CD8-positive, alpha-beta T cell (primary cell): ENCODE measurements at regions of chr2 and their contacts with region 1.

Region 1: GRCh38 chr2:160353166-160353565 is 140.4 kb downstream of the RBMS1 start:
- DNase-seq: peak in 4 of 9 experiments; percentile 35 to 65 (median 46)
- ATAC-seq: peak; percentile 79
- H3K4me3 ChIP-seq: no peak overlapping the region
- H3K4me3 Mint-ChIP-seq: no peak overlapping the region
- H3K27ac ChIP-seq: no peak overlapping the region
- H3K27ac Mint-ChIP-seq: peak overlapping the region; percentile 60
- H3K4me1 ChIP-seq: peaks cover 18% of the 10 kb centered on the region
- H3K4me1 Mint-ChIP-seq: peaks cover 77% of the 10 kb centered on the region
- H3K27me3 ChIP-seq: no peaks in the 10 kb centered on the region
- H3K27me3 Mint-ChIP-seq: no peaks in the 10 kb centered on the region
- CTCF ChIP-seq: peak; percentile 64

Region 2: DNA sequence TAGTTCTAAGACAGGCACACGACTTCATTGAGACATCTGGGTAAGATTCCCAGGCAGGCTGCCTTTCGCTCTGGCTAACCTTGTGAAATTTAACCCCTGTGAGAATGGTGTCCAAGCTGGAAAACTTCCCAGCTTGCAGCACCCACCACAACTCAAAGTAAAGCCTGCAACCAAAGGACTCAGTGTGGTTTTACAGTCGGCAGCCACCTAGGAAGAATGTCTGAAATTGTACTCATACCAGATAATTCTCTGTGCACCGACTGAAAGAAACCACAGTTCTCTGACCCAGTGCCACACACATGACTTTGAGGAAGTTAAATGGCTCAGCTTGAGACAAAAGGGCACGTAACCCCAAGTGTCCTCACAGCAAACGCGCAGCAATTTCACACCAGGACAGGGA is 14.7 kb after region 1 on chr2:
- CTCF ChIA-PET with region 1: interaction called, 9 read pairs
- POLR2A ChIA-PET with region 1: no interaction called
- intact Hi-C with region 1: loop called in 1 of 2 experiments (anchors 2 kb)
- DNase-seq: peak in 2 of 9 experiments; percentile 17 to 33
- ATAC-seq: peak; percentile 36
- H3K4me3 ChIP-seq: no peak overlapping the region
- H3K4me3 Mint-ChIP-seq: peak overlapping the region; percentile 32
- H3K27ac ChIP-seq: peak overlapping the region in 1 of 2 experiments; percentile 21
- H3K27ac Mint-ChIP-seq: peak overlapping the region; percentile 37
- H3K4me1 ChIP-seq: peaks cover 43% of the 10 kb centered on the region
- H3K4me1 Mint-ChIP-seq: peaks cover 86% of the 10 kb centered on the region
- H3K27me3 ChIP-seq: no peaks in the 10 kb centered on the region
- H3K27me3 Mint-ChIP-seq: no peaks in the 10 kb centered on the region
- CTCF ChIP-seq: no peak

Region 3: DNA sequence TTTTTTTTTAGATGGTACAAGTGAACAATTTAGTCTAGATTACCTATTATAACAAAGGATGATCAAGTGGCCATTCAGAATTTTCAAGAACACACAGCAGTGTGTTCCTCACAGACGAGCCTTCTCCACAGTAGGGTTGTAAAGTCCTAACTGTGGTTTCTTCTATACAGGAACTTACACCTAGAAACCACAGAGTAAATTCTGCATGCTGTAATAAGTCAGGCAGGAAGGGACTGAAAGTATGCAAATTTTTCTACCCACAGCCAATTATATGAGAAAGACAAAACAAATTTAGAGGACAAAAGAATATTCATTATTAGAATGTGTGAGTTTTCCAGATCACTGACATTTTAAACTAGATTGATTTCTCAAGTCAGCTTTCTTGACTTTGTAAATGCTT is 41.0 kb after region 1 on chr2:
- CTCF ChIA-PET with region 1: interaction called, 3 read pairs
- POLR2A ChIA-PET with region 1: no interaction called
- intact Hi-C with region 1: loop called in 1 of 2 experiments (anchors 5 kb)
- DNase-seq: peak in 2 of 9 experiments; percentile 69 to 80
- ATAC-seq: peak; percentile 92
- H3K4me3 ChIP-seq: peak overlapping the region in 1 of 2 experiments; percentile 21
- H3K4me3 Mint-ChIP-seq: peak overlapping the region; percentile 50
- H3K27ac ChIP-seq: peak overlapping the region in 1 of 2 experiments; percentile 49
- H3K27ac Mint-ChIP-seq: peak overlapping the region; percentile 86
- H3K4me1 ChIP-seq: peaks cover 88% of the 10 kb centered on the region
- H3K4me1 Mint-ChIP-seq: peaks cover 64% of the 10 kb centered on the region
- H3K27me3 ChIP-seq: no peaks in the 10 kb centered on the region
- H3K27me3 Mint-ChIP-seq: no peaks in the 10 kb centered on the region
- CTCF ChIP-seq: no peak

Region 4: DNA sequence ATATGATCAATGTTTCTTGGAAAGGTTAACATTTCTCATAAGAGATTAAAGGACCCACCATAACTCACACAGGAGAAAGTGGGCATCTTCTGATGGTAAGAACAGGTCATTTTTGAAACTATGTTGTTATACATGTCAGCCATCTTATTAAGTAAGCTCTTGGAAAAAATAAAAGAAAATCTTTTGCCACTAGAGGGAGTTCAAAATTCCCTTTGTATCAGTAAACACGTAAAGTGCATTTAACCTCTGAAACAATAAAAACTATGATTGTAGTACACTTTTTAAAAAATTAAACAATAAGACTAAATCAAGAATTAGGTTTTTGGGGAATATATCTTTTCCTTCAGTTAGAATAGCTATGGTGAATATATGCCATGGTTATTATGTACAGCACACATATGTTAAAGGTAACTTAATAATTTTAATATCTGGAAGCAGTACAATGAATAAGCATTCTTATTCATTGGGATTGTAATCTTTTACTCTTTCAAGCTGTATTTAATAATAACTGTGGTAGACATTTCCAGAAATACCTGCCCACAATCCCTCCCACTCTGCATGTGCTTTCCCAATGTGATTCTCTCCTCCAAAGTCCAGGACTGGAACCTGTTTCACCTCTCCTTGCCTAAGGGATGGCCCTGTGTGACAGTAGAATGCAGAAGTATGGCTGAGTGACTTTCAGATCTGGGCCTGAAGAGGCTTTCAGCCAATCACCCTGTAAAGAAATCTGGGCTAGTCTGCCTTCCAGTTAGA is 76.3 kb after region 1 on chr2:
- CTCF ChIA-PET with region 1: interaction called, 13 read pairs
- POLR2A ChIA-PET with region 1: no interaction called
- intact Hi-C with region 1: no loop called
- DNase-seq: peak in 2 of 9 experiments; percentile 72 to 81
- ATAC-seq: peak; percentile 53
- H3K4me3 ChIP-seq: no peak overlapping the region
- H3K4me3 Mint-ChIP-seq: peak overlapping the region; percentile 26
- H3K27ac ChIP-seq: peak overlapping the region in 1 of 2 experiments; percentile 77
- H3K27ac Mint-ChIP-seq: peak overlapping the region; percentile 92
- H3K4me1 ChIP-seq: peaks cover 42% of the 10 kb centered on the region
- H3K4me1 Mint-ChIP-seq: peaks cover 71% of the 10 kb centered on the region
- H3K27me3 ChIP-seq: no peaks in the 10 kb centered on the region
- H3K27me3 Mint-ChIP-seq: no peaks in the 10 kb centered on the region
- CTCF ChIP-seq: peak; percentile 84

Region 5: GRCh38 chr2:160918906-160919503 is 565.8 kb after region 1 on chr2:
- CTCF ChIA-PET with region 1: interaction called, 3 read pairs
- POLR2A ChIA-PET with region 1: no interaction called
- intact Hi-C with region 1: loop called in 1 of 2 experiments (anchors 1 kb)
- DNase-seq: peak in 6 of 9 experiments; percentile 10 to 56 (median 36)
- ATAC-seq: no peak
- H3K4me3 ChIP-seq: no peak overlapping the region
- H3K4me3 Mint-ChIP-seq: no peak overlapping the region
- H3K27ac ChIP-seq: no peak overlapping the region
- H3K27ac Mint-ChIP-seq: no peak overlapping the region
- H3K4me1 ChIP-seq: no peaks in the 10 kb centered on the region
- H3K4me1 Mint-ChIP-seq: no peaks in the 10 kb centered on the region
- H3K27me3 ChIP-seq: no peaks in the 10 kb centered on the region
- H3K27me3 Mint-ChIP-seq: no peaks in the 10 kb centered on the region
- CTCF ChIP-seq: peak; percentile 14

Region 6: DNA sequence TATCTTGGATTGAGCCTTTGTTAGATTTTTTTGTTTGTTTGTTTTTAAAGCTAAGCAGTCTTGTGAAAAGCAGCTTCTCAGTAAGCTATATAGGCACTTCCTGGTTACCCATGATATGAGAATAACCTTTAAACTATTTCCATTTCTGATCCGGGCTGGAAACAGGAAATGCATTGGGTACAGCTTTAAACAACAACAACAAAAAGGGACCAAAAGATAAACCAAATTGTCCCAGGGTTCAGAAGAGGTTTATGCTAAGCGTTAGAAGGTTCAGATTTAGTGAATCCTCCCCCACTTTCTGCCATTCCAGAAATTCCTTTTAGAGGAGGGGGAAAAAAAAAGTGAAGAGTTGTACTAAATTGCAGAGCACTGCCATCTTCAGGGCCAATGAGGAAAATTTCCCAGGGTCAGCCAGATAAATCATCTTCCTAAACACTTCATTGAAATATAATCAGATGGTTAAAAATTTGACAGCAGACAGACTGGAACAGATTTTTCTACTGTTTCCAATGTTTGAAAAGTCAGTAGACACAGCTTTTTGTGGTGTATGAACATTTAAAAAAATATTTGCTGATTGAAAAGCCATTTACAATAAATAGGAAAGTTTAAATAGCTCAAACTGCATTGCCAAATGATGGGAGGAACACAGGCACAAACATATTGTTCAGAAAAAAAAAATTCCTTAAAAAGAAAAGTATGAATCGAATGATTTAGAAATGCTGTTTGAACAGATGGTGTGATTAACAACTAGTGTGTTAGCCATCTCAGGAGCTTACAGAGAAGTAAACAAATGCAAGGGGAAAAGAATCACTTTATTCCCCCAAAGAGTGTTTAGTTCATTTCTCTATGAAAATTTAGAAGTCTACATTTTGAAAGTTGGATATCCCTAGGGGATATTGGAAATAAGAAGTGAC is 617.1 kb after region 1 on chr2:
- CTCF ChIA-PET with region 1: interaction called, 10 read pairs
- POLR2A ChIA-PET with region 1: no interaction called
- intact Hi-C with region 1: no loop called
- DNase-seq: peak in 2 of 9 experiments; percentile 35 to 41
- ATAC-seq: no peak
- H3K4me3 ChIP-seq: no peak overlapping the region
- H3K4me3 Mint-ChIP-seq: no peak overlapping the region
- H3K27ac ChIP-seq: no peak overlapping the region
- H3K27ac Mint-ChIP-seq: no peak overlapping the region
- H3K4me1 ChIP-seq: no peaks in the 10 kb centered on the region
- H3K4me1 Mint-ChIP-seq: no peaks in the 10 kb centered on the region
- H3K27me3 ChIP-seq: no peaks in the 10 kb centered on the region
- H3K27me3 Mint-ChIP-seq: no peaks in the 10 kb centered on the region
- CTCF ChIP-seq: peak; percentile 40